ENCODE measurements at regions of chr11 and their contacts with region 1.

Region 1: DNA sequence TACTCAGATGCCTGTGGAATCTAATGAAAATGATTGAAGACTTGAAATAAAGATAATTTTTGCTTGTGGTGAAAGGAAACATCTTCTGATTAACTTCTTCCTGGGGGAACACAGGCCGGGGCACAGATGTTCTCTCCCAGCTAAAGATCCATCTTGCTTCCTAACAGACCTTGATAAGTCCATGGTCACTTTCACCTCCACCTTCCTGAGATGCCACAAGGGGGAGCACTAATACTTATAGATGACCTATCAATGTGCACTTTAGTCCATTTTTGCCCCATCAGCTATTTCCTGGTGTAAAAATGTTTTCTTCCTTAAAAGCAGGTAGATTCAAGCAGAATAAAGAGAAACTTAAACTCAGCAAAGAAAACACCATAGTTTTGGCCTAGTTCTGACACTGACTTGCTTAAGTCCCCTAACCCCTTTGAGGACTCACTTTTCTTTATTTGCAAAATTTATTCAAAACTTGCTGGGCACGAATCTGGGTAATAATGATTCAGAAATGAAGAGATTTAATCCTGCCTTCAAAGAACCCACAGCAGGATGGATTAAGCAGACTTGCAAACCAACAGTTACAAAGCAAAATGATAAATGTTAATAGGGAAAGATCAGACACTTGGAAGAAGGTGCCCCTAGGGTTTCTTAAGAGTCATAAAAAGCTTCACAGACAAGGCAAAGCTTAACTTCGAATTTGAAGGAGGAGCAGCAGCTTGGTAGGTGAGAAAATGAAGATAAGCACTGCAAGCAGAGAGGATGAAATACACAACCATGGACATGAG is 158.7 kb downstream of the RAB38 start:
- DNase-seq: peak; percentile 91
- H3K4me3 ChIP-seq: no peak overlapping the region
- H3K27ac ChIP-seq: no peak overlapping the region
- H3K27me3 ChIP-seq: no peaks in the 10 kb centered on the region
- CTCF ChIP-seq: peak; percentile 80

Region 2: DNA sequence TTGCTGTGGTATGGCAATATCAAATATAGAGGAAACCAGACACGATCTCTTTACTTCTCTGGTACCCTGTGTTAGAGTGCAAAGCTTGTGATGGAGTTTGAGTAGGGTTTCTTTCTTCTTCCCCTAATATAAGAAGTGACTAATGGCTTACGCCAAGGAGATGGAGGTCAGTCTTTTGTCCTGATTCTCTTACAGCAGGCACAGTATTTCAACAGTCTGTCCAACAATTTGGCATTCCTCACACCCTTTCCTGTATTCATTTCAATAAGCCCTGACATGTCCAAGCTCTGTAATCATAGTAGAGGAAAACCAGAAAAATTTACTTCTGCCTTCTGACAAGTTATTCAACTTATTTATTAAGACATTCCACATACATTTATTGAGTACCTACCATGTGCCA is 432.6 kb before region 1 on chr11:
- in situ Hi-C with region 1: no loop called
- DNase-seq: no peak
- H3K4me3 ChIP-seq: no peak overlapping the region
- H3K27ac ChIP-seq: no peak overlapping the region
- H3K27me3 ChIP-seq: no peaks in the 10 kb centered on the region
- CTCF ChIP-seq: no peak

Region 3: DNA sequence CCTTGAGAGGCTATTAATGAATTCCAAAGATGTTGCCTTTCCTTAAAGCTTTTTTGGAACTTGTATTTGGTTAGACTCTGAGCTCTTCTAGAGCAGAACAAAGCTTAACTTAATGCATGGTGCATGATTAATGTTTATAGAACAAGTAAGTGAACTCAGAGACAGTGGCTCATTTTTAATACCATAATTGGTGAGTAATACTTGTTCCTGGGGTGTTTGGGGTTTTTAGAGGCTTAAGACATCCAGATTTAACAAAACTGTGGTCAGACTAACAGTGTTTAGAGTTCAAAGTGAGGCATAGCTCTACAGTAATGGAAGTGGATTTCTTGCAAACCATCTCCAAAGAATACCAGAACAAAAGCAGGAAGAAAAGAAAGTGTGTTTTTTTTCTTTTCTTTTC is 394.7 kb after region 1 on chr11:
- in situ Hi-C with region 1: no loop called
- DNase-seq: peak; percentile 56
- H3K4me3 ChIP-seq: no peak overlapping the region
- H3K27ac ChIP-seq: peak overlapping the region; percentile 12
- H3K27me3 ChIP-seq: no peaks in the 10 kb centered on the region
- CTCF ChIP-seq: no peak

Region 4: DNA sequence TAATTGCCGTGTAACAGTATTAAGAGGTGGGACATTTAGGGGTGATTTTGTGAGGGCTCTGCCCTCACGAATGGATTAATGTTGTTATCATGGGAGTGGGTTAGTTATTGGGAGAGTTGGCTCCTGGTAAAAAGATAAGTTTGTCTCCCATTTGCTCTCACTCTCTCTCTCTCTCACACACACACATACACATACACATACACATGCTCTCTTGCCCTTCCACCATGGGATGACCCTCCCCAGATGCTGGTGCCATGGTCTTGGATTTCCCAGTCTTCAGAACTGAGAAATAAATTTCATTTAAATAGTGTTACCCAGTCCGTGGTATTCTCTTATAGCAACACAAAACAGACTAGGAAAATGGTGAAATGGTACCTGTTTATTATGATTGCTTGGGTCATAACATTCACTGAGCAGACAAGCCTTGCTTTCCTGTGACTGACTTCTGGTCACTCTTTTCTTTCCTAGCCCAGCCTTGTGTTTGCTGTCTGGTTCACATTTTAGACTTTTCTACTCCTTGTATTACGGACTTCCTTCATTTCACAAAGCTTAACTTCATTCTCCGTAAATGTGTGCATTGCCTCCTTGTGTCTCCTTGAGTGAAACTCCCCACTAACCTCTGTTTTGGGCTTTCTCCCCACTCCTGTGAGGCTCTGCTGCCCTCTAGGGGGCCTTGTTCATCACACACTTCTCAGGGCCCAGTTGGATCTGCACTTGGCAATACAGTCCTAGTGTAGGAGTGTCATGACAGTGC is 527.5 kb after region 1 on chr11:
- in situ Hi-C with region 1: loop called (anchors 25 kb)
- DNase-seq: peak; percentile 86
- H3K4me3 ChIP-seq: no peak overlapping the region
- H3K27ac ChIP-seq: no peak overlapping the region
- H3K27me3 ChIP-seq: no peaks in the 10 kb centered on the region
- CTCF ChIP-seq: peak; percentile 98

Measured in brain microvascular endothelial cell (primary cell).